ENCODE measurements at regions of chr19 and their contacts with region 1.

Region 1: GRCh38 chr19:1605236-1606137 is at the start of gene UQCR11:
- DNase-seq: peak; percentile 94
- ATAC-seq: peak; percentile 85
- H3K4me3 ChIP-seq: peak within 1 kb of the TSS; percentile 76 to 100 (median 97)
- H3K27ac ChIP-seq: peak within 1 kb of the TSS; percentile 99
- H3K4me1 ChIP-seq: peaks cover 33% of the 10 kb centered on the region
- H3K27me3 ChIP-seq: no peaks in the 10 kb centered on the region; a peak in 2 of 5 replicates
- CTCF ChIP-seq: peak; percentile 87
- EP300 ChIP-seq: 0 out of 4 replicates have a peak, but pooled peaks of 1 of the 2 experiments have one; percentile 4
- POLR2A ChIP-seq: peak; percentile 91 to 93
- RAD21 ChIP-seq: peak; percentile 88
- total RNA-seq, gene UQCR11: 214 and 216 TPM in 2 replicates

Region 2: GRCh38 chr19:1513499-1514294 is 91.8 kb before region 1 on chr19:
- CTCF ChIA-PET with region 1: no interaction called
- POLR2A ChIA-PET with region 1: no interaction called
- in situ Hi-C with region 1: no loop called
- intact Hi-C with region 1: no loop called
- DNase-seq: no peak
- ATAC-seq: peak; percentile 70
- H3K4me3 ChIP-seq: peak overlapping the region; percentile 50 to 73 (median 71); a peak in 4 of 6 replicates
- H3K27ac ChIP-seq: no peak overlapping the region
- H3K4me1 ChIP-seq: peaks cover 34% of the 10 kb centered on the region
- H3K27me3 ChIP-seq: peaks cover 0 to 15% of the 10 kb centered on the region in 2 experiments; a peak in 3 of 5 replicates
- CTCF ChIP-seq: peak; percentile 80
- EP300 ChIP-seq: no peak
- POLR2A ChIP-seq: no peak
- RAD21 ChIP-seq: peak; percentile 59

Region 3: DNA sequence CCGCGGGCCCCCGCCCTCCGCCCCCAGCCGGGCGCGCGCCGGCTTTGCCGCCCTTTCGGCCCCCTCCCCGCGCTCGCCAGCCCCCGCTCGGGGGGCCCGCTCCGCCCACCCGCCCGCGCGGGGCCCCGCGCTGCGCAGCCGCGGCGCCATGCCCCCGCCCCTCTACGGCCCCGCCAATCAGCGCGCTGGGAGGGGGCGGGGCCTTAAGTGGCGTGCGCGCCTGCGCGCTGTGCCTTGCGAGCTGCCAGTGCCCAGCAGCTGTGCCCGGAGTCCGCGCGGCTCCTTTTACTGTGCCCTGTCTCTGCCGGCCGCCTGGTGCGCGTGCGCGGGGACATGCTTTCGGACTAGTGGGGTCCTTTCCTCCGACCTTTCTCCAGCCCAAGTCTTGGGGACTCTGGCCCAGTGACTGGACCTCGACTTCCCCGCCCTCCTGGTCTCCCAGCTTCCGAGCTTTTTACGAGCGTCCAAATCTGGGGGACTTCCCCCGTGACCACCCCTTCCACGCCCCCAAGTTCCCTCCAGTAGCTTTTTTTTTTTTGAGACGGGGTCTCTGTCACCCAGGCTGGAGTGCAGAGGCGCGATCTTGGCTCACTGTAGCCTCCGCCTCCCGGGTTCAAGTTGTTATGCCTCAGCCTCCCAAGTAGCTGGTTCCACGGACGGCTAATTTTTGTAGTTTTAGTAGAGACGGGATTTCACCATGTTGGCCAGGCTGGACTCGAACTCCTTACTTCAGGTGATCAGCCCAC is 12.6 kb before region 1 on chr19 and contains the start of gene MBD3:
- CTCF ChIA-PET with region 1: no interaction called
- POLR2A ChIA-PET with region 1: interaction called, 24 read pairs
- in situ Hi-C with region 1: no loop called
- intact Hi-C with region 1: no loop called
- DNase-seq: peak; percentile 81
- ATAC-seq: peak; percentile 69
- H3K4me3 ChIP-seq: peak within 1 kb of the TSS; percentile 72 to 90 (median 83)
- H3K27ac ChIP-seq: peak within 1 kb of the TSS; percentile 99
- H3K4me1 ChIP-seq: peaks cover 41% of the 10 kb centered on the region
- H3K27me3 ChIP-seq: no peaks in the 10 kb centered on the region; a peak in 1 of 5 replicates
- CTCF ChIP-seq: no peak
- EP300 ChIP-seq: peak in 1 of 2 experiments; percentile 69; a peak in 1 of 4 replicates
- POLR2A ChIP-seq: peak in 1 of 2 experiments; percentile 94; a peak in 2 of 4 replicates
- RAD21 ChIP-seq: peak; percentile 22; the same call in 1 of the 2 replicates
- total RNA-seq, gene MBD3: 58.9 and 76.9 TPM in 2 replicates

Region 4: GRCh38 chr19:1632462-1633268 is 27.2 kb after region 1 on chr19:
- CTCF ChIA-PET with region 1: no interaction called
- POLR2A ChIA-PET with region 1: no interaction called
- in situ Hi-C with region 1: no loop called
- intact Hi-C with region 1: no loop called
- DNase-seq: no peak
- ATAC-seq: no peak; the same call in 2 of the 3 replicates
- H3K4me3 ChIP-seq: no peak overlapping the region
- H3K27ac ChIP-seq: no peak overlapping the region
- H3K4me1 ChIP-seq: 0 out of 2 replicates have a peak, but pooled peaks cover 11% of the 10 kb centered on the region
- H3K27me3 ChIP-seq: no peaks in the 10 kb centered on the region
- CTCF ChIP-seq: no peak
- EP300 ChIP-seq: no peak
- POLR2A ChIP-seq: no peak
- RAD21 ChIP-seq: no peak

Region 5: GRCh38 chr19:1652471-1653299 is 47.2 kb after region 1 on chr19 and contains the start of gene TCF3:
- CTCF ChIA-PET with region 1: no interaction called
- POLR2A ChIA-PET with region 1: interaction called, 7 read pairs
- in situ Hi-C with region 1: no loop called
- intact Hi-C with region 1: loop called (anchors 5 kb)
- DNase-seq: peak; percentile 96
- ATAC-seq: peak; percentile 79
- H3K4me3 ChIP-seq: peak within 1 kb of the TSS; percentile 77 to 85 (median 80)
- H3K27ac ChIP-seq: peak within 1 kb of the TSS; percentile 97
- H3K4me1 ChIP-seq: peaks cover 38% of the 10 kb centered on the region
- H3K27me3 ChIP-seq: peaks cover 4 to 29% of the 10 kb centered on the region in 2 experiments; a peak in 3 of 5 replicates
- CTCF ChIP-seq: no peak; the same call in 1 of the 2 replicates
- EP300 ChIP-seq: peak in 1 of 2 experiments; percentile 28; a peak in 1 of 4 replicates
- POLR2A ChIP-seq: peak in 1 of 2 experiments; percentile 43; a peak in 1 of 4 replicates
- RAD21 ChIP-seq: no peak; the same call in 1 of the 2 replicates
- total RNA-seq, gene TCF3: 38.0 and 53.2 TPM in 2 replicates

Region 6: DNA sequence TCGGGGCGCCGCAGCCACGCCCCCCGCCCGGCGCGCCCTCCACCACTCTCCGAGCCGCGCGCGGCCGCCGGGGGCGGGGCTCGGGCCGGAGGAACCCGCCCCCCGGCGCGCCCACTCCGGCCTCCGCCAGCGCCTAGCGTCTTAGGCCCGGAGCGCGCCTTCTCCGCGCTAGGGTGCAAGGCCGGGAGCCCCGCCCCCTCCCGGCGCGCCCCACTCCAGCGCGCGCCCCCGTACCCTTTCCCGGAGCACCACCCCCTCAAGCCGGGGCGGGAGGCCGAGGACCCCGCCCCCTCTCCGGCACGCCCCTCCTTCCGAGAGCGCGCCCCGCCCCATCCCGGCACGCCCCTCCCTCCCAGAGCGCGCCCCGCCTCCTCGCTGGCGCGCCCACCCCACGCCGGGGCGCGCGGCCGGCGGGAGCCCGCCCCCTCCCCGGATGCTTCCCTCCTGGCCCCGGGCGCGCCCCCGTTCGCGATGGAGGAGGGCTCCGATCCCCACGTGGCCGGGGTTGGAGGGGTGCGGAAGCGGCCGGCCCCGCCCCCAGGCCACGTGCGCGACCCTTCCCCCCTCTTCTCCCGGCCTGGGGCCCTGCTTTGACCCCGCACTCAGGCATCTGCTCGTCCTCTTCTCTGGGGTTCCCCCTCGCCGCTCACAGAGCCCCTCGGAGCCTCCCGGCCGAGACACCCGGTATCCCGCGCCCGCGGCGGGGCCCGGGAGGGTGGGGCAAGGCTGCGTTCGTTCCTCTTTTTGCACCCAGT is 258.4 kb after region 1 on chr19:
- CTCF ChIA-PET with region 1: no interaction called
- POLR2A ChIA-PET with region 1: no interaction called
- in situ Hi-C with region 1: no loop called
- intact Hi-C with region 1: no loop called
- DNase-seq: peak; percentile 85
- ATAC-seq: peak; percentile 48
- H3K4me3 ChIP-seq: peak overlapping the region; percentile 73 to 98 (median 82)
- H3K27ac ChIP-seq: peak overlapping the region; percentile 98
- H3K4me1 ChIP-seq: peaks cover 64% of the 10 kb centered on the region
- H3K27me3 ChIP-seq: no peaks in the 10 kb centered on the region; a peak in 1 of 5 replicates
- CTCF ChIP-seq: peak; percentile 30; the same call in 1 of the 2 replicates
- EP300 ChIP-seq: 0 out of 4 replicates have a peak, but pooled peaks of 1 of the 2 experiments have one; percentile 35
- POLR2A ChIP-seq: peak; percentile 45 to 62; a peak in 2 of 4 replicates
- RAD21 ChIP-seq: no peak; the same call in 1 of the 2 replicates

Region 7: GRCh38 chr19:1956868-1957492 is 351.5 kb after region 1 on chr19:
- CTCF ChIA-PET with region 1: no interaction called
- POLR2A ChIA-PET with region 1: no interaction called
- in situ Hi-C with region 1: no loop called
- intact Hi-C with region 1: no loop called
- DNase-seq: no peak
- ATAC-seq: no peak
- H3K4me3 ChIP-seq: no peak overlapping the region
- H3K27ac ChIP-seq: no peak overlapping the region
- H3K4me1 ChIP-seq: no peaks in the 10 kb centered on the region
- H3K27me3 ChIP-seq: no peaks in the 10 kb centered on the region
- CTCF ChIP-seq: no peak
- EP300 ChIP-seq: no peak
- POLR2A ChIP-seq: no peak
- RAD21 ChIP-seq: no peak